Activated T-helper 2 cell treated with anti-CD3 and anti-CD28 coated beads, Interferon-gamma antibody, Interleukin-2, Interleukin-4, amounts not matched to agents 10 μg/mL and 5 μg/mL and 100 μg/mL, durations not matched to agents 14 hours and 24 hours and 36 hours (primary cell): ENCODE measurements at regions of chr6 and their contacts with region 1.

Region 1: DNA sequence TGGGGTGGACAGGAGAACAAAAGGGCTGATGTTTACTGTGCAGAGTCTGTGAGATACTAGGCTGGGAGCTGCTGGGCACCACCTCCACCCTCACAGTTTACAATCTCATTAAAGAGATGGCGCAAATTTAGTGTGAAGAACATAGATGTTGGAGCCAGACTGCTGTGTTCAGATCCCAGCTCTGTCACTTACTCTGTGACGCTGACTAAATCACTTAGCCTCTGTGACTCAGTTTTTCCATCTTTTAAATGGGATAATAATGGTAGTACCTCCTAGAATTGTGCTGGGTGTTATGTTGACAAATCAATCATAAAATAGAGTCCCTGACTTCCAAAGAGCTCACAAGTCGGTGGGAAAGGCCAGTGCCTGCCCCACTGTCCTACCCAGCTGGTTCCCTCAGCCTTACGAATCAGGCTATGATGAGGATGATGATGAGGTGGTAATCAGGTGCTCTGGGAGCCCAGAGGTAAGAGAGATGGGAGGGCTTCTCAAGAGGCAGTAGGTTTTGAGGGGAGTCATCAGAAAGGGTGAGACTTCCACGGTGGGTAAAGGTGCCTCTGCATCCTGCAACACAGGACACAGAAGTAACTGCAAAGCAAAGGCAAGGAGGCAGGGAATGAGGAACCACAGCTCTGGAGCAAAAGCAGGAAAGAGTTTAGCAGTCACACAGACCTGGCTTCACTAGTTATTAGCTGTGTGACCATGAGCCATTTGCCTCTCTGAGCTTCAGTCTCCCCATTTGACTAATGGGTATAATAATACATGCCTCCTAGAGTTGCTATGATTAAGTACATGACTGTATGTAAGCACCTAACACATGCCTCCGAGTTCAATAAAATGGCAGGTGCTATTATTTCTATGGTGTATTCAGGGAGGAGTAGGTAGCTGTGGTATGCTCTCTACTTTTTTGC is 8.9 kb downstream of the FYN start:
- DNase-seq: no peak
- H3K4me3 Mint-ChIP-seq: peak overlapping the region; percentile 69
- H3K27ac Mint-ChIP-seq: peak overlapping the region; percentile 95
- H3K4me1 Mint-ChIP-seq: peaks cover 86% of the 10 kb centered on the region
- H3K27me3 Mint-ChIP-seq: no peaks in the 10 kb centered on the region

Region 2: DNA sequence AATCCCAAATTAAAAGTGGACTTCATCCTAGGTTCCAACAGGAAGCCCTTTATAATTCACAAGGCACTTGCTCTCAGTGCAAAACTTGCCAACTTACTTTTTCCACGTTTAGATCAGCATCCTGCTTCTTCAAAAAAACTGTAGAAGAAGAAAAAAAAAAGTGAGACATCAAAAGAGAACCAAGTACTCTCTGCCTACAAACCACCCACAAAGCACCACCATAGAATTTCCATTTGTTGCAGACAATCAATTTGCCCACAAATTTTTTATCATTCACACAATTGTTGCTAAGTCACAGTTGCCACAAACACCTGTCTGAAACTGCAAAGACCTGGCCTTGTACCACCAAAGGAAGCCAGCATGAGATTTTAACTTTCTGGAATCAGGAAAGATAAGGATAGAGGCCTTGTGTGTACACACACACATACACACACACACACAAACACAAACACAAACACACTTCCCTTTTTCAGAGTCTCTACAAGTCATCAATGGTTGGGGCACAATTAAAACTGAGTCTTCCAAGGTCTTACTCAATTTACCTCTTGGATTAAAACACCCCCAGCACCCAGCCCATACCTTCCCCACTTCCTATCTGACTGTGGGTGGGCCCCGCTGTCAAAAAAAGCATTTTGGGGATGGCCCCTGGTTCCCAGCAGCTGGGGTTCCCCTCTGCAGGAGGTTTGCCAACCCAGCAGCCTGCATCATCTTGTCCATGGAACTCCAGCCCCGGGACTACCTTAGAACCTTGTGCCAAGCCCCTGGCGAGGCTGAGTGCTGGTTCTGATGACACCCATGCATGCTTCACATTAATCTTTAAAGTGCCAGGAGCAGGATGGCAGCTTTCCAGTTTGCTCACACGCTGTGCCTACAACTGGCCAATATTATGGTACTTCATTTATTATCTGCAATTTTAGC is 17.6 kb before region 1 on chr6:
- intact Hi-C with region 1: loop called (anchors 1 kb)
- DNase-seq: no peak
- H3K4me3 Mint-ChIP-seq: peak overlapping the region; percentile 53
- H3K27ac Mint-ChIP-seq: peak overlapping the region; percentile 92
- H3K4me1 Mint-ChIP-seq: peaks cover 71% of the 10 kb centered on the region
- H3K27me3 Mint-ChIP-seq: no peaks in the 10 kb centered on the region